ENCODE measurements at regions of chr13 and their contacts with region 1.

Region 1: GRCh38 chr13:99051768-99052455 is 74.0 kb upstream of the DOCK9 start:
- DNase-seq: peak; percentile 74
- H3K4me3 Mint-ChIP-seq: peak overlapping the region; percentile 75
- H3K27ac Mint-ChIP-seq: peak overlapping the region; percentile 90
- H3K4me1 Mint-ChIP-seq: peaks cover 71% of the 10 kb centered on the region
- H3K27me3 Mint-ChIP-seq: no peaks in the 10 kb centered on the region

Region 2: GRCh38 chr13:99067160-99067985 is 15.5 kb after region 1 on chr13:
- intact Hi-C with region 1: loop called (anchors 2 kb)
- DNase-seq: no peak
- H3K4me3 Mint-ChIP-seq: peak overlapping the region; percentile 51
- H3K27ac Mint-ChIP-seq: peak overlapping the region; percentile 2
- H3K4me1 Mint-ChIP-seq: peaks cover 58% of the 10 kb centered on the region
- H3K27me3 Mint-ChIP-seq: no peaks in the 10 kb centered on the region

Region 3: DNA sequence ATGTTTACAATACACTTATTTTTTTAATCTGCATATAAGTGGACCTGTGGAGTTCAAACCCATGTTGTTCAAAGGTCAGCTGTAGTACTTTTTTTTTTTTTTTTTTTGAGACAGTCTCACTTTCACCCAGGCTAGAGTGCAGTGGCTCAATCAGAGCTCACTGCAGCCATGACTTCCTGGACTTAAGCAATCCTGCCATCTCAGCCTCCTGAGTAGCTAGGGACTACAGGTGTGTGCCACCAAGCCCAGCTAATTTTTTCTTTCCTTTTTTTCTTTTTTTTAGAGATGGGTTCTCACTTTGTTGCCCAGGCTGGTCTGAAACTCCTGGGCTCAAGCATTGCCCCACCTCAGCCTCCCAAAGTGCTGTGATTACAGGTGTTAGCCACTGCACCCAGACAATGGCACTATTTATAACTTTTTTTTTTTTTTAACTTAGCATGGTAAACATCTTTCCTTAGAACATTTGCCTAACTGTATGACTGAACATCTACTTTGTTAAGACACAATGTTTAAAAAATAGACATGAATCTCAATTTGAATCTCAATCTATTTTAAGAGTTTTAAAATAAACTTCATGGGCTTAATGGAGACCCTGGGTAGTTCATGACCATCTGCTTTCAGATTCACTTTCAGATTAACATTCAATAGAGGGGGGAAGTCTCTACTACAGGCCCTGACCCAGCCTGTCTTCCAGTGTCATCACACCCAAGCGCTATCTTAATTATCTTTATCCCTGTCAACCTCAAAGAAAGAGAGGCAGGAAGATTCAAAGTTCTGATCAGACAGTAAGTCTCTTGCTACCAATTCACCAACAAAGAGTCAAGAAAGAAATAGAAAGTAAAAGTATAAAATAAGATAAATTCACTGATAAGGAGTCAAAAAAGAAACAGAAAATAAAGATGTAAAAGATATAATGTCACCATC is 23.6 kb after region 1 on chr13:
- intact Hi-C with region 1: loop called (anchors 2 kb)
- DNase-seq: peak; percentile 82
- H3K4me3 Mint-ChIP-seq: peak overlapping the region; percentile 75
- H3K27ac Mint-ChIP-seq: peak overlapping the region; percentile 95
- H3K4me1 Mint-ChIP-seq: peaks cover 59% of the 10 kb centered on the region
- H3K27me3 Mint-ChIP-seq: no peaks in the 10 kb centered on the region